Heart right ventricle (tissue), 16 donors: ENCODE measurements at regions of chr9 and their contacts with region 1.

Region 1: GRCh38 chr9:125889476-125890419 is 142.6 kb downstream of the PBX3 start:
- DNase-seq: peak; percentile 23 to 39
- ATAC-seq: peak; percentile 72 to 87 (median 82)
- H3K4me3 ChIP-seq: peak overlapping the region; percentile 23 to 66 (median 58)
- H3K27ac ChIP-seq: peak overlapping the region; percentile 52 to 81 (median 69)
- H3K4me1 ChIP-seq: peaks cover 3 to 46% (median 15%) of the 10 kb centered on the region in 9 donors
- H3K27me3 ChIP-seq: peaks cover 0 to 22% (median 0%) of the 10 kb centered on the region in 7 donors
- CTCF ChIP-seq: peak in 1 of 9 donors; percentile 12

Region 2: DNA sequence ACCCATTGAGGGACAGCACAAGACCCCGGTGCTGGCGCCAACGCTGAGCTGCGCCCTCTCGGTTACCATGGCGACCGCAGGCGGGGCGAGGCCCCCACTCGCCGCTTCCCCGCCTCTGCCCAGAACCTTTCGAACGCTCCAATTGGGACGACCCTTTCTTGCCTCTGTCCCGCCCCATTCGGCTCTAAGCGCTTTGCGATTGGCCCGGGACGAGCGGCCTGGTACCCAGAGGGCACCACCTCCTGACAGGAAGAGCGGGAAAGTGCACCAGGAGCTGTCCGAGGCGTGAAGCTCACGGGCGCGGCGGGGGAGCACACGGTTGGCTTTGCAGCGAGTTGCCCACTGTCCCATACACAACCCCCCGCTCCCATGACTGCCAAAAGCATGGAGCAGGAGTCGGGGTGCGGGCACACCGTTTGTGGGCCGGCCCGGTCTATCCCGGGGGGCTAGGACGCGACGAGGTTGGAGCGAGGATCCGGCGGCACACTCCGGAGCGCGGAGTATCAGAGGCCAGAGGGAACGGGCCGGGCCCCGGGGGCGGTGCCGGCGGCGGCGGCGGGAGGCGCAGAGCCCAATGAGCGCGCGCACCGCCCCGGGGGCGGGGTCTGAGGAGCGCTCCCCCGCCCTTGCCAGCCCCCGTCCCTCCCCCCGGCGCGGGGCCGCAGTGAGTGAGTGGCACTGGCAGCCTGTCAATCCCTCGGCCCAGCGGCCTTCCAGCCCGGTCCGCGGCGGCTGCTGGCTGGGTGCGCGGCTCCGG is 143.6 kb before region 1 on chr9:
- intact Hi-C with region 1: loop called in 5 of 10 experiments (anchors 5 to 10 kb)
- DNase-seq: peak; percentile 95 to 96
- ATAC-seq: peak; percentile 94 to 98 (median 96)
- H3K4me3 ChIP-seq: peak overlapping the region; percentile 54 to 90 (median 77)
- H3K27ac ChIP-seq: peak overlapping the region; percentile 65 to 94 (median 85)
- H3K4me1 ChIP-seq: peaks cover 0 to 36% (median 27%) of the 10 kb centered on the region in 9 donors
- H3K27me3 ChIP-seq: no peaks in the 10 kb centered on the region
- CTCF ChIP-seq: no peak

Region 3: GRCh38 chr9:125758986-125759763 is 130.6 kb before region 1 on chr9:
- intact Hi-C with region 1: loop called in 4 of 10 experiments (anchors 5 to 10 kb)
- DNase-seq: peak in 1 of 2 donors; percentile 20
- ATAC-seq: peak; percentile 23 to 80 (median 70)
- H3K4me3 ChIP-seq: peak overlapping the region in 7 of 10 donors; percentile 0 to 45 (median 32)
- H3K27ac ChIP-seq: peak overlapping the region in 2 of 10 donors; percentile 17 to 52
- H3K4me1 ChIP-seq: peaks cover 0 to 91% (median 69%) of the 10 kb centered on the region in 9 donors
- H3K27me3 ChIP-seq: no peaks in the 10 kb centered on the region
- CTCF ChIP-seq: no peak

Region 4: GRCh38 chr9:125829743-125830142 is 60.0 kb before region 1 on chr9:
- intact Hi-C with region 1: loop called in 1 of 10 experiments (anchors 10 kb)
- DNase-seq: peak in 1 of 2 donors; percentile 21
- ATAC-seq: peak in 6 of 8 donors; percentile 58 to 86 (median 70)
- H3K4me3 ChIP-seq: peak overlapping the region in 9 of 10 donors; percentile 6 to 55 (median 49)
- H3K27ac ChIP-seq: peak overlapping the region in 4 of 10 donors; percentile 8 to 63 (median 22)
- H3K4me1 ChIP-seq: peaks cover 0 to 20% (median 0%) of the 10 kb centered on the region in 9 donors
- H3K27me3 ChIP-seq: no peaks in the 10 kb centered on the region
- CTCF ChIP-seq: no peak